ENCODE measurements at regions of chrX and their contacts with region 1.

Region 1: GRCh38 chrX:154980330-154981096 is 42.0 kb downstream of the F8 start:
- DNase-seq: peak; percentile 67
- H3K4me3 Mint-ChIP-seq: peak overlapping the region; percentile 79
- H3K27ac Mint-ChIP-seq: peak overlapping the region; percentile 72
- H3K4me1 Mint-ChIP-seq: peaks cover 15% of the 10 kb centered on the region
- H3K27me3 Mint-ChIP-seq: peaks cover under 1% of the 10 kb centered on the region

Region 2: DNA sequence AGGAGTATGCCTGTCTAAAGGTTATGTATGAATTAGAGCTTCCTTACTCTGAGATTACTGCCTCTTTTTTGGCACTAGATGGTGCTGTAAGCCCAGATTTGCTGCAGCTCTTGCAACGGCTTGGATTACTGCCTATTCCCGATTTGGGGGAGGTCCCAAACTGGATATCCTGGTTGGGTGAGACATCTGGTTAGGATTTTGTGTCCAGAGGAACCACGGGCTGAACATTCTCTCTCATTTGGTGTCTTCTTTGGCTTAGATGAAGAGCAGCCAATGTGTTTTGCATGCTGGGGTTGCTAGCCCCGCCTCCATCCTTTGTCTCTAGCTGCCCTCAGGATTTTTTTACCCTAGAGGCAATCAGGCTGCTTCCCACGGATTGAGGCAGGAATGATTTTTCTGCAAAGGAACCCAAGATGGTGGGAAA is 62.4 kb before region 1 on chrX:
- intact Hi-C with region 1: loop called (anchors 2 kb)
- DNase-seq: peak; percentile 1
- H3K4me3 Mint-ChIP-seq: peak overlapping the region; percentile 68
- H3K27ac Mint-ChIP-seq: no peak overlapping the region
- H3K4me1 Mint-ChIP-seq: peaks cover 6% of the 10 kb centered on the region
- H3K27me3 Mint-ChIP-seq: peaks cover 15% of the 10 kb centered on the region

Region 3: DNA sequence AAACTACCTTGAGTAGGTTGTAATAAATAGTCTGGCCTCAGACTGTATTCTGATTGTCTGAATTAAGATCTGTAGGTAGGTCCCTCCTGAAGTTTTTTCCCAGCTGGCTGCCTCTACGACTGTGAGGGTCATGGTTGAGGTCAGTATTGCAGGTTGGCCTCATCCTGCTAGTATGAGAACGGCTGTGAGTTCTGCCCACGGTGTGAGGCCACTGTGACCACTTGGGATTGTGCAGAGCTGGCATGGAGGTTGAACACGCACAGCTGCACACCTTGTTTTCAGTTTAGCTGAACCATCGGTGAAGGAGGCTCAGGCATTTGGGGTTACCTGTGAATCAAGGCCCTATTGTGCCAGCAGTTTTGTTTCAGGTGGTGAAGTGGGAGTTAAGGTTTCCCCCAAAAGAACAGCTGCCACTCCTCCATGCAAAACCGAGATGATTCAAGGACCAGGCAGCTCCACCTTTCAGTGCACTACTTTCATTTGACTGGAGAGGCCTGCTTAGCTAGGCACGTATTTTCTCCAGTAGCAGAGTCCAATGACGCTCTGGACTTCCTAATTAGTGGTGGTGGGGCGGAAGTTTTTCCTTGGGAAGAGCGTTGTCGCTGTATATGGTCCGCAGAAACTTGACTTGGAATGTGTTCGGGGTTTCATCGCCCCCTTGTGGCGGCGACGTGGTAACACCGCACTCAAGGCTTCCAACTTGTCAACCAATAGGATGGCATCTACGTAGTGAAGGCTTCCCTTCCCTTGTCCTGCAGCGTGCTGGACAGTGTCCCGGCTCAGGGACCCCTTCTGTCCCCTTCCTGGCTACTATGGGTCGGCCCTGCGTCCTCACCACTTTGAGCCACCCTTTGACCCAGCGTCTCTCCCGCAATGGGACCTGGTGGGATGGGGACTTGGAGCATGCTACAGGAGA is 76.6 kb after region 1 on chrX:
- intact Hi-C with region 1: loop called (anchors 1 kb)
- DNase-seq: peak; percentile 22
- H3K4me3 Mint-ChIP-seq: peak overlapping the region; percentile 62
- H3K27ac Mint-ChIP-seq: no peak overlapping the region
- H3K4me1 Mint-ChIP-seq: peaks cover 35% of the 10 kb centered on the region
- H3K27me3 Mint-ChIP-seq: no peaks in the 10 kb centered on the region

Region 4: DNA sequence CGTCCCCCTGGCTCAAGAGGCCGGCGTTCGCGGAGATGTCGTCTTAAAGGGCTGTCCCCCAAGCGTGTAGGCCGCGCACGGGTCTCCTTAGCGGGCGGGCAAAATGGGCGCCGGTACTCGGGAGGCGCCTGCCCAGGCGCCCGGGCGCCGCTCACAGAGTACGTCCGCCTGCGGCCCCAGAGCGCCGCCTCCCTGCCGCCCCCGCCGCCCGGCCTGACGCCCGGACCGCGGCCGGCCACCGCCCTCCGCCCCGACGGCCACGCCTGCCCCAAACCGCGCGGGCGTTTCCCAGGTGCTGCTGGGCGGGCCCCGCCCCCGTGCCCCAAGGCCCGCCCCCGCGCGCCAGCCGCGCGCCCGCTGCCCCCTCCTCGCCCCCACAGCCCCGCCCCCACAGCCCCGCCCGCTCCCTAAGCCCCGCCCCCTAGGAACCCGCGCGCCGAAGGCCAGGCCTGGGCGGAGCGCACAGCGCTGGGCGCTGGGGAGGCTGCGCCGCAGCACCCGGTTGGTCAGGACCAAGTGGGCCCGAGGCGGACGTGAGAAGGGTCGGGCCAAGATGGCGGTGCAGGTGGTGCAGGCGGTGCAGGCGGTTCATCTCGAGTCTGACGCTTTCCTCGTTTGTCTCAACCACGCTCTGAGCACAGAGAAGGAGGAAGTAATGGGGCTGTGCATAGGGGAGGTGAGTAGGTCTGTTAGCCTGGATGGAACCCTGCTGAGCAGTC is 90.6 kb after region 1 on chrX and contains the starts of genes BRCC3, CMC4 and MTCP1:
- intact Hi-C with region 1: loop called (anchors 1 kb)
- DNase-seq: peak; percentile 72
- H3K4me3 Mint-ChIP-seq: peak within 1 kb of the TSS; percentile 95
- H3K27ac Mint-ChIP-seq: peak within 1 kb of the TSS; percentile 93
- H3K4me1 Mint-ChIP-seq: peaks cover 50% of the 10 kb centered on the region
- H3K27me3 Mint-ChIP-seq: no peaks in the 10 kb centered on the region
- total RNA-seq, gene BRCC3: 28.9 and 30.5 TPM in 2 replicates
- total RNA-seq, gene CMC4: 1.3 and 3.0 TPM in 2 replicates
- total RNA-seq, gene MTCP1: 9.1 and 12.7 TPM in 2 replicates

Region 5: DNA sequence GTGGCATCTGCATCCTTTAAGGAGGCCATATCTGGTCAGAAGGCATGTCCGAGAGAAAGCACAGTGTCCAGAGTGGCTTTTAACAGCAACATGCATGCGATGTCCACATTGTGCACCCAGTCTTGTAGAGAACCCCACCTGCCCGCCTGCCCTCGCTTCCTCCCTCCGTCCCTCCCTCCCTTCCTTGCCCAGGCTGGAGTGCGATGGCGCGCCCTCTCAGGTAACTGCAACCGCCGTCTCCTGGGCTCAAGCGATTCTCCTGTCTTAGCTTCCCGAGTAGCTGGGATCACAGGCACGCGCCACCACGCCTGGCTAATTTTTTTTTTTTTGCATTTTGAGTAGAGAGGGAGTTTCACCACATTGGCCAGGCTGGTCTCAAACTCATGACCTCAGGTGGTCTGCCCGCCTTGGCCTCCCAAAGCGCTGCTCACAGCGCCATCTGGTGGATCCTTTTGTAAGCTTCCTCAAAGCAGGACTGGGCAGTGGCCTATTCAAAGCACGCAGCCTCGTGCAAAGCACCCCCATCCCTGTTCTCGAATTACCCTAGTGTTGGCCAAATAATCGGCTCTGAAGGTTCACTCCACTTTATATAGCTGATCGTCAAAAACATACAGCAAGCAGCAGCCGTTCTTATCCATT is 105.8 kb after region 1 on chrX:
- intact Hi-C with region 1: loop called (anchors 1 kb)
- DNase-seq: no peak
- H3K4me3 Mint-ChIP-seq: no peak overlapping the region
- H3K27ac Mint-ChIP-seq: no peak overlapping the region
- H3K4me1 Mint-ChIP-seq: no peaks in the 10 kb centered on the region
- H3K27me3 Mint-ChIP-seq: no peaks in the 10 kb centered on the region

Region 6: GRCh38 chrX:155148724-155149537 is 168.4 kb after region 1 on chrX:
- intact Hi-C with region 1: loop called (anchors 1 kb)
- DNase-seq: peak; percentile 11
- H3K4me3 Mint-ChIP-seq: no peak overlapping the region
- H3K27ac Mint-ChIP-seq: no peak overlapping the region
- H3K4me1 Mint-ChIP-seq: peaks cover 4% of the 10 kb centered on the region
- H3K27me3 Mint-ChIP-seq: peaks cover 5% of the 10 kb centered on the region

Region 7: GRCh38 chrX:155819966-155820491 is 839.5 kb after region 1 on chrX:
- intact Hi-C with region 1: loop called (anchors 2 kb)
- DNase-seq: peak; percentile 3
- H3K4me3 Mint-ChIP-seq: no peak overlapping the region
- H3K27ac Mint-ChIP-seq: no peak overlapping the region
- H3K4me1 Mint-ChIP-seq: no peaks in the 10 kb centered on the region
- H3K27me3 Mint-ChIP-seq: peaks cover 6% of the 10 kb centered on the region

Region 8: GRCh38 chrX:155923200-155923599 is 942.7 kb after region 1 on chrX:
- intact Hi-C with region 1: no loop called
- DNase-seq: no peak
- H3K4me3 Mint-ChIP-seq: no peak overlapping the region
- H3K27ac Mint-ChIP-seq: no peak overlapping the region
- H3K4me1 Mint-ChIP-seq: no peaks in the 10 kb centered on the region
- H3K27me3 Mint-ChIP-seq: no peaks in the 10 kb centered on the region